Esophagus muscularis mucosa (tissue), 4 donors: ENCODE measurements at regions of chr15 and their contacts with region 1.

Region 1: DNA sequence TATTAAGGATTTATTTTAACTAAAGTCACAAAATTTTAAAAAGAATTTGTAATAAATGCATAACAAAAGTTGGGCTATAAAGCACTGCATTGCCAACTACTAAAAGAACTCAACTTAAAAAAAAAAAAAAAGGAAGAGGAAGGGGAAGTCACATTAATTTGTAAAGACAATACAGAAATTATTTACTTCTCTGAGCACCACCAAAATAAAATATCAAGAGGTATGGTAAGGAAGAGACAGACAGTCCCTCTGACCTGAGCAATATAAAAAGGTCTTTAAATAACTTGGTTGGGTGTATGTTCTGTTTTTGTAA is 83.5 kb downstream of the UACA start:
- DNase-seq: no peak
- H3K4me3 ChIP-seq: no peak overlapping the region
- H3K27ac ChIP-seq: no peak overlapping the region
- H3K4me1 ChIP-seq: peaks cover 0 to 16% (median 9%) of the 10 kb centered on the region in 4 donors
- H3K27me3 ChIP-seq: no peaks in the 10 kb centered on the region
- CTCF ChIP-seq: no peak
- EP300 ChIP-seq: no peak
- POLR2A ChIP-seq: no peak

Region 2: GRCh38 chr15:70722266-70723121 is 42.6 kb after region 1 on chr15:
- intact Hi-C with region 1: loop called (anchors 1 kb)
- DNase-seq: no peak
- H3K4me3 ChIP-seq: no peak overlapping the region
- H3K27ac ChIP-seq: no peak overlapping the region
- H3K4me1 ChIP-seq: peaks cover 24 to 43% (median 34%) of the 10 kb centered on the region in 4 donors
- H3K27me3 ChIP-seq: no peaks in the 10 kb centered on the region
- CTCF ChIP-seq: peak; percentile 78 to 82 (median 79)
- EP300 ChIP-seq: no peak
- POLR2A ChIP-seq: no peak

Region 3: GRCh38 chr15:70763120-70763878 is 83.4 kb after region 1 on chr15 and contains the start of gene UACA:
- intact Hi-C with region 1: loop called (anchors 10 kb)
- DNase-seq: peak; percentile 99
- H3K4me3 ChIP-seq: peak within 1 kb of the TSS; percentile 75 to 97 (median 91)
- H3K27ac ChIP-seq: peak within 1 kb of the TSS; percentile 90 to 97 (median 96)
- H3K4me1 ChIP-seq: peaks cover 21 to 37% (median 25%) of the 10 kb centered on the region in 4 donors
- H3K27me3 ChIP-seq: no peaks in the 10 kb centered on the region
- CTCF ChIP-seq: peak in 1 of 3 experiments; percentile 7
- EP300 ChIP-seq: no peak
- POLR2A ChIP-seq: peak; percentile 89
- total RNA-seq, gene UACA: 23.9 to 40.7 (median 28.9) TPM